Activated CD4-positive, alpha-beta T cell treated with anti-CD3 and anti-CD28 coated beads, Interleukin-2, amount 10 ng/mL, durations not matched to agents 7 days and 5 days (primary cell): ENCODE measurements at regions of chr11 and their contacts with region 1.

Region 1: GRCh38 chr11:123438191-123438627 is 8.1 kb downstream of the GRAMD1B start:
- DNase-seq: no peak
- H3K4me3 Mint-ChIP-seq: peak overlapping the region; percentile 5
- H3K27ac Mint-ChIP-seq: peak overlapping the region; percentile 68
- H3K4me1 Mint-ChIP-seq: peaks cover 89% of the 10 kb centered on the region
- H3K27me3 Mint-ChIP-seq: no peaks in the 10 kb centered on the region

Region 2: DNA sequence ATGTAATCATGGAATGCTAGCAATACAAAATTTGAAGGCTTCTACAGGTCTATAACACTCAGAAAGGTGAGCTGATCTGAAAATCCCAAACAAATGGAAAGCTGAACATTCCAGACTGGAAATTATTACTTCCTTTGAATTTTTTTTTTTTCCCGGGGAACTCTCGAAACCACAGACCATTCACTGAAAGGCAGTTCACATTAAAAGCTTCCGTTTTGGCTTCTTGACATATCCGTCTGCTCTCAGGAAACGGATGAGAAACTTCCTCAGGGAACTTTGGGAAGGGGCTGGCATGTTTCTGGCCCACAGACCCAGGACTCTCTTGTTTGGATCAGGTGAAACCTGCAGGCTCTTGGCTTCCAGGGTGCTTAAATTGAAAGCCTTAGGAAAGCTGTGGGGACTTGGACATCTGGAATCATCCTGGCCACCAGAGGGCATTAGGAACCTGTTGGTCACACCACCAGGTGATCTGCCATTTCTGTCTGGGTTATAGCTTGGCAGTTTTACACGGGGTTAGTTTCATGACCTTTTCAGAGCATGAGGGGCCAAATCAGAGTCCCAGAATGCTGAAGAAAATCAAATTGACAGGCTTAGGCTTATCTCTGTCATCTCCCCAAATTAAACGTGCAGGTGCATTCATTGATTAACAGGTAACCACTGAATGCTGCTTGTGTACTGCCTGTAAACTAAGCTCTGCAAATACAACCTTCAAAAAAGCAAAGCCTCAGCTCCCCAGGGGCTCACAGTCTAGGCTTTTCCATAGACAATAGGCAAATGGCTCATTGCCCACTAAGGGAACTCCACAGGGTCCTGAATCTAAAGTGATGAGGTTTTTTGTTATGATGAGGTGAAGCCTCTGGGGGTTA is 30.8 kb before region 1 on chr11:
- CTCF ChIA-PET with region 1: interaction called, 38 read pairs
- POLR2A ChIA-PET with region 1: no interaction called
- DNase-seq: peak; percentile 74
- H3K4me3 Mint-ChIP-seq: peak overlapping the region; percentile 68
- H3K27ac Mint-ChIP-seq: no peak overlapping the region
- H3K4me1 Mint-ChIP-seq: peaks cover 48% of the 10 kb centered on the region
- H3K27me3 Mint-ChIP-seq: no peaks in the 10 kb centered on the region

Region 3: DNA sequence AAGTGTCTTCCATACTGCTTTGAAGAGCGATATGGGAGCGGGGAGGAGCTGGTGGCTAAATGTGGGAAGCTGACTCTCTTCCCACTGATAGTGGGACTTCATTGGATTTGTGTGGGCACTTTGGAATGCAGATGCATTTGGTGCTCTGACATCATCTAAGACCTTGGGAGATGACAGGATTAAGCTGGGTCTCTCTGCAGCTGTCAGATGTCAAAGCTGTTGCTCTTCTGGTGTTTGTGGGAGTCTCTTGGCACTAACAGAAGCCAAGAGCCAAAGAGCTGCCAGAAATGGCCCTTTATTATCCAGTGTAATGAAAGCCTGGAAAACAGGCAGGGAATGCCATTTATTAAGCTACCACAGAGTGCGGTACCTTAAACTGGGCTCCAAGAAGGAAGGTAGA is 12.4 kb after region 1 on chr11:
- CTCF ChIA-PET with region 1: interaction called, 22 read pairs
- POLR2A ChIA-PET with region 1: no interaction called
- DNase-seq: no peak
- H3K4me3 Mint-ChIP-seq: no peak overlapping the region
- H3K27ac Mint-ChIP-seq: peak overlapping the region; percentile 86
- H3K4me1 Mint-ChIP-seq: peaks cover 69% of the 10 kb centered on the region
- H3K27me3 Mint-ChIP-seq: no peaks in the 10 kb centered on the region